Activated CD4-positive, alpha-beta memory T cell treated with anti-CD3 and anti-CD28 coated beads for 36 hours (primary cell): ENCODE measurements at regions of chr7 and their contacts with region 1.

Region 1: GRCh38 chr7:28155019-28155660 is 25.5 kb downstream of the JAZF1 start:
- DNase-seq: no peak
- H3K4me3 Mint-ChIP-seq: peak overlapping the region; percentile 4
- H3K27ac Mint-ChIP-seq: peak overlapping the region; percentile 61
- H3K4me1 Mint-ChIP-seq: peaks cover 51% of the 10 kb centered on the region
- H3K27me3 Mint-ChIP-seq: peaks cover 2% of the 10 kb centered on the region

Region 2: GRCh38 chr7:27901028-27901760 is 253.9 kb before region 1 on chr7:
- CTCF ChIA-PET with region 1: no interaction called
- POLR2A ChIA-PET with region 1: no interaction called
- intact Hi-C with region 1: loop called (anchors 2 kb)
- DNase-seq: peak; percentile 34
- H3K4me3 Mint-ChIP-seq: no peak overlapping the region
- H3K27ac Mint-ChIP-seq: no peak overlapping the region
- H3K4me1 Mint-ChIP-seq: peaks cover 19% of the 10 kb centered on the region
- H3K27me3 Mint-ChIP-seq: no peaks in the 10 kb centered on the region

Region 3: DNA sequence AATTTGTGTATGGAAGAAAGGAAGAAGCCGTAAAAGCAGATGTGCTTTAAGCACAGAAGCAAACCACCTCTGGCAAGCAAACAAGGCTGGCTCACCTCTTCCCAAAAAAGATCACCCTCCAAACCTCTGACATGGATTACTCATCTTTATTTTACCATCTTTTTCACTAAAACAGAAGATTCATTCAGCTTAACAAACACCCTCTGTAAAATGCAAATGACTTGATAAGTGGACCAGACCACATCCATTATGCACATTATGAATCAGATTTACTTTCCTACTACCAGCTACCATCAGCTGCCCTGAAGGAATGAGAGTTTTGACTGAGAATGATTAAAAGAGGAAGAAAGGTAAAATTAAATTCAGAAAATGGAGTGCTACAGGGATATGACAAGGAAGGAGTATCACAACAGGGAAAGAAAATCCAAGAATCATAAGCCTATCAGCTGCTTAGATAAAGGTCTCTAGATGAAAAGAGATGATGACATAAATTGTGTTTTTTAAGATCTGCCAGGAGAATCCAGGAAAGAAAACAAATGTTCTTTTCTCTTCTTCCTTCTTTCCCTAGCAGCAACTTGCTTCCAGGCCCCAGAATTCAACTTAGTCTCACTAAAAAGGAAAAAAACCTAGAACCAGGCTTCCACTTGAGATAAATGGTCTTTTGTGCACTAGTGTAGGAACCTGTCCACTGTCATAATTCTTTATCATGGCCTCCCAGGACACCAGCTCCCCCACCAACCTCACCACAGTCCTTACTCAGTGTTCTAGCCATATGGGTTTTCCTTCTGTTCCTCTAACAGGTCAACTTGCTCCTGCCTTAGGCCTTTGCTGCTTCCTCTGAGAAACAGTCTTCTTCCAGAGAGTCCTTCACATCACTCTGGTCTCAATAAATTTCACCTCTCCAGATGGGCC is 21.9 kb before region 1 on chr7:
- CTCF ChIA-PET with region 1: no interaction called
- POLR2A ChIA-PET with region 1: no interaction called
- intact Hi-C with region 1: loop called (anchors 2 kb)
- DNase-seq: no peak
- H3K4me3 Mint-ChIP-seq: no peak overlapping the region
- H3K27ac Mint-ChIP-seq: no peak overlapping the region
- H3K4me1 Mint-ChIP-seq: peaks cover 31% of the 10 kb centered on the region
- H3K27me3 Mint-ChIP-seq: no peaks in the 10 kb centered on the region

Region 4: GRCh38 chr7:28207486-28208158 is 52.5 kb after region 1 on chr7:
- CTCF ChIA-PET with region 1: no interaction called
- POLR2A ChIA-PET with region 1: no interaction called
- intact Hi-C with region 1: loop called (anchors 1 kb)
- DNase-seq: no peak
- H3K4me3 Mint-ChIP-seq: no peak overlapping the region
- H3K27ac Mint-ChIP-seq: no peak overlapping the region
- H3K4me1 Mint-ChIP-seq: peaks cover 32% of the 10 kb centered on the region
- H3K27me3 Mint-ChIP-seq: peaks cover 19% of the 10 kb centered on the region

Region 5: GRCh38 chr7:28292834-28293526 is 137.8 kb after region 1 on chr7:
- CTCF ChIA-PET with region 1: interaction called, 3 read pairs
- POLR2A ChIA-PET with region 1: interaction called, 5 read pairs
- intact Hi-C with region 1: loop called (anchors 1 kb)
- DNase-seq: peak; percentile 17
- H3K4me3 Mint-ChIP-seq: no peak overlapping the region
- H3K27ac Mint-ChIP-seq: no peak overlapping the region
- H3K4me1 Mint-ChIP-seq: peaks cover 18% of the 10 kb centered on the region
- H3K27me3 Mint-ChIP-seq: peaks cover 43% of the 10 kb centered on the region

Region 6: DNA sequence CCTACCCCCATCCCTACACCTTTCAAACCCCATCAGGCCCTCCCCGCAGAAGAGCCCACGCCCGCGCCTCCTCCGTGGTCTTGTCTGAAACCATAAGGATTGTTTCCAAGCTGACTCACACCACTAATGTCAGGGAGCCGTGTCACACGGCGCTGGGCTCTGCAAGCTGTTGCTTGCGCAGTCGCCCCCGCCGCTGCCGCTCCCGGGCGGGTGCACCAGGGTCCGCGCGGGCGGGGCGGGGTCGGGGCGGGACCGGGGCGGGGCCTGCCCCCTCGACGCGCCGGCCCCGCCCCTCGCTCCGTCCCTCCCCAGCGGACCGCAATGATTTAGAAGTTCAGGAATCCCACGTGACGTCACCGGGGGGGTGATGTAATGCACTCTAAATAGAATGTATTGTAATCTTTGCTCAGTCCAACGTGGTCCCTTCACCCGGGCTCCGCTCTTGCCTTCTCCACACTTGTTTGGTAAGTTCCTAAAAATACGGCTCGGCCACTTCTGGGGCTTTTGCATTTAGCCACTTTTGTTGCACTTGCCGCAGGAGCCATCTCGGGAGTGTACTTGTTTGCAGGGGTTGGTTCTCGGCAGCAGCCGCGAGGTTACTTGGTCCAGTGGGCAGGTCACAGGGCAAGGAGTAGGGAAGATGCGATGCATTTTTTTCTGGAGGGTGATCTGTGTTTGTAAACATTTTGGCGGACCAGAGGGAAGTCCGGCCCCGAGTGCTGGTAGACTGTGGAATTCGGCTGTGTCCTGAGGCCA is 254.0 kb after region 1 on chr7:
- CTCF ChIA-PET with region 1: no interaction called
- POLR2A ChIA-PET with region 1: no interaction called
- intact Hi-C with region 1: loop called (anchors 5 kb)
- DNase-seq: peak; percentile 77
- H3K4me3 Mint-ChIP-seq: peak overlapping the region; percentile 63
- H3K27ac Mint-ChIP-seq: no peak overlapping the region
- H3K4me1 Mint-ChIP-seq: peaks cover 21% of the 10 kb centered on the region
- H3K27me3 Mint-ChIP-seq: peaks cover 66% of the 10 kb centered on the region